Adrenal gland (tissue), 19 donors: ENCODE measurements at regions of chr9 and their contacts with region 1.

Region 1: GRCh38 chr9:130461218-130461630 is 16.5 kb downstream of the ASS1 start:
- DNase-seq: peak in 6 of 7 donors; percentile 47 to 70 (median 58)
- H3K4me3 ChIP-seq: no peak overlapping the region
- H3K27ac ChIP-seq: no peak overlapping the region
- H3K4me1 ChIP-seq: no peaks in the 10 kb centered on the region
- H3K27me3 ChIP-seq: no peaks in the 10 kb centered on the region
- CTCF ChIP-seq: peak; percentile 73 to 96 (median 92)
- POLR2A ChIP-seq: no peak

Region 2: GRCh38 chr9:130682490-130683121 is 221.4 kb after region 1 on chr9:
- intact Hi-C with region 1: loop called (anchors 1 to 2 kb)
- DNase-seq: peak; percentile 79 to 91 (median 88)
- H3K4me3 ChIP-seq: peak overlapping the region in 1 of 4 donors; percentile 54
- H3K27ac ChIP-seq: no peak overlapping the region
- H3K4me1 ChIP-seq: peaks cover 8 to 13% of the 10 kb centered on the region in 2 donors
- H3K27me3 ChIP-seq: no peaks in the 10 kb centered on the region
- CTCF ChIP-seq: peak; percentile 62 to 88 (median 85)
- POLR2A ChIP-seq: peak in 1 of 2 donors; percentile 24